ENCODE measurements at regions of chr3 and their contacts with region 1.

Region 1: DNA sequence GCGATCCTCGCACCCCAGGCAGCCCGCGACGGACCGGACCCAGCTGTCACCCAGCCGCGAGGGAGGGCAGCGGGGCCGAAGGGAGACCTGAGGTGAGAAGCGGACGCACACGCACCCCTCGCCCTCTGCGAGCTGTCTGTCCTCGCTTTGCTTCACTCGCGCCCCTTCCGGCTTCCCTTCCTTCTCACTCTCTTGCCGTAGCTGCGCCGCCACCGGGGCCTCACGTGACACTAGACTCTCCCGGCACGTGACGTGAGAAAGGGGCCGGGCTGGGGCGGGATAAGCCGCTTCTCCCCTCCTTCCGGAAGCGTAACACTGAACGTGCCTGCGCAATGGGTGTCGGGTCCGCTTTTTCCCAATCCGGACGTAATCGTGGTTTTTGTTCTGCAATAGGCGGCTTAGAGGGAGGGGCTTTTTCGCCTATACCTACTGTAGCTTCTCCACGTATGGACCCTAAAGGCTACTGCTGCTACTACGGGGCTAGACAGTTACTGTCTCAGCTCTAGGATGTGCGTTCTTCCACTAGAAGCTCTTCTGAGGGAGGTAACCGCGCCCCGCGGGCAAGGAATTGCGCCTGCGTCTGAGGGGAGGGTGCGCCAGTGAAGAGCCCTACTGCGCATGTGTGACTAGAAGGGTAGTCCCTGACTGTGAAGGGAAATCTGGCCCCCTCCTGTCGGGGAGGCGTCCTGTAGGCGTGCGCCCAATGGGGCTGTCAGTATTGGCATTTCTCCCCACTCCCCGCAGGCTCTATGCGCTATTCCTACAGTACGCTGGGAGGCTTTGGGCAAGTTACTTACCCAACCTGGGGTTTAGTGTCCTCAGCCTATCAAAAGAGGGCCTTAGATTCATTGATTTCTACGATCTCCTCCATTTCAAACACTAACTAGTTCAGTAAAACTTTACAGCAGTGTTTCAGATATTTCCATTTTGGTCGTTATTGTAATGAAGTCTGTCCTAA is at the starts of genes ATG3 and SLC35A5:
- DNase-seq: peak; percentile 99
- ATAC-seq: peak; percentile 80
- H3K4me3 Mint-ChIP-seq: peak within 1 kb of the TSS; percentile 99
- H3K27ac Mint-ChIP-seq: peak within 1 kb of the TSS; percentile 99
- H3K4me1 Mint-ChIP-seq: peaks cover 50% of the 10 kb centered on the region
- H3K27me3 Mint-ChIP-seq: no peaks in the 10 kb centered on the region
- CTCF ChIP-seq: no peak
- total RNA-seq, gene ATG3: 48.3 and 54.9 TPM in 2 replicates
- total RNA-seq, gene SLC35A5: 25.1 and 26.6 TPM in 2 replicates

Region 2: DNA sequence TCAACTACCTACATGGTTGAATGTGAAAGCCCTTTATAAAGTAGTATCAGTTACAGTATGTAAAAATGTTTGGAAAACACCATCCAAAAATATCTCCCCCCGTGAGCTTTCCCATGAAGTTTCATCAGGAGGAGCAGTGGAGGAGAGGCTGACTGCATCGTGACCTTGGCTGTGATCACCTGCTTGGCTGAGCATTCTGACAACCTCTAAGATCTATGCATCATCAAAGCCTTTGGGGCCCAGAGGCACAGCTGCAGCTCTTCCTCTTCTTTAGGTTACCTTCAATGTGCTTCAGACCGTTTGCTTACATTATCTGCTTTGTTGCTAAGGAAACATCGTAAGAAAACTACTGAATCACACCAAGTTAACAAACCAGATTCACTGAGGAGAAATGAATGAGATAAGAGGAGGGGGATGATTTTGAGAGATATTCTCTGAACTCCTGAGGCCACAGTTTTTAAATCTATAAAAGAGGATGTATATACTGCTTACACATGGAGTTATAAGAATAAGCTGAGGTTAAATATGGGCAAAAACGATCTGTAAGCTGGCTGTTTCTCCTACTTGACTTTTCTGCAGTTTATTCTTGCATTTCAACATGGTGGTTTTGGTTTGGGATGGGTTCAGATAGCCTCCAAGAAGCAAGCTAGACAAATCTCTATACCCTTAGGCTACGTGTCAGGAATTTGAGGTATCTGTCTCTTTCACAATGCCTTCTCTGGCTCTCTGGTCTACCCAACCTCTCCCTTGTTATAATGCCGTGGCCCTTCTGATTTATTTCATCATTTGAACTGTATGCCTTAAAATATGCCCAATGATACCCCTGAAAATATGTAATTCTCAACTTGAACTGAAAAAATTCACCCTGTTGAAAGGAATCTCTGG is 432.9 kb before region 1 on chr3:
- CTCF ChIA-PET with region 1: no interaction called
- POLR2A ChIA-PET with region 1: no interaction called
- intact Hi-C with region 1: loop called (anchors 1 kb)
- DNase-seq: peak; percentile 39
- ATAC-seq: peak; percentile 73
- H3K4me3 Mint-ChIP-seq: peak overlapping the region; percentile 6
- H3K27ac Mint-ChIP-seq: peak overlapping the region; percentile 82
- H3K4me1 Mint-ChIP-seq: peaks cover 91% of the 10 kb centered on the region
- H3K27me3 Mint-ChIP-seq: no peaks in the 10 kb centered on the region
- CTCF ChIP-seq: no peak

Region 3: DNA sequence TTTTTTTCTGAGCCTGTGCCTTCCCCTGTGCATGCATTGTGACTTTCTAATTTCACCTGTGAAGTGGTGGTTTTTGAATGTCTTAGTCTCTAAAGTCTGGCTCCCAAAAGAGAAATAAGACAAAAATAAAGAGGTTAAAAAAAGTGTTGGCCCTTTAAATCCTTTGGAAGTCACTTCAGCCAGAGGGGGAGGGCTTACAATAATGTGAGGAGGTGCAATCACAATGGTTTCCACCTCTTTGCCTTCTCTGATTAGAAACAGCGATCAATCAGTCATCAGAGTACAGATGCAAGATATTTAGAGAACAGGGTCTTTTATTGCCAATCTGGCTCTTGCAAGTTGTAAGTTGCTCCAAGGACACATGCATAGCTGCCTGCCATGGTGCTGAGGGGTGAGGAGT is 364.9 kb before region 1 on chr3:
- CTCF ChIA-PET with region 1: no interaction called
- POLR2A ChIA-PET with region 1: no interaction called
- intact Hi-C with region 1: no loop called
- DNase-seq: no peak
- ATAC-seq: no peak
- H3K4me3 Mint-ChIP-seq: no peak overlapping the region
- H3K27ac Mint-ChIP-seq: no peak overlapping the region
- H3K4me1 Mint-ChIP-seq: no peaks in the 10 kb centered on the region
- H3K27me3 Mint-ChIP-seq: no peaks in the 10 kb centered on the region
- CTCF ChIP-seq: no peak

Region 4: DNA sequence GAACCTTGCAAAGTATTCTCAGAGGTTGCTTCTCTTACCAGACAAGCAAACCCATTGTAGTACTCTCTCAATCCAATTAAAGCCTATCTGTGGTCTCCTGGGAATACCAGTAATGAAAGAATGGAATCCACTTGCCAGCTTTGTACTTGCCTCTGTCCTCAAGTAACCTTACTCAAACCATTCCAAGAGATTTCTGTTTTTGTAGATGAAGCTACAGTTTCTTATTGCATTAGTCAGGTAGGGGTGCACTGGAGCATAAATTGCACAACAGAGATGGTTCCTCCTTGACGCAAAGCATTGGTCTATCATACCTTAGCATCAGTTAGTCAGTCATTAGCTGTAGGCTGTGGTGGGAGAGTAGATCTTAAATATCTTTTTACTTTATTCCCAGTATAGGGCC is 115.7 kb before region 1 on chr3:
- CTCF ChIA-PET with region 1: no interaction called
- POLR2A ChIA-PET with region 1: no interaction called
- intact Hi-C with region 1: no loop called
- DNase-seq: no peak
- ATAC-seq: peak; percentile 71
- H3K4me3 Mint-ChIP-seq: no peak overlapping the region
- H3K27ac Mint-ChIP-seq: peak overlapping the region; percentile 4
- H3K4me1 Mint-ChIP-seq: peaks cover 39% of the 10 kb centered on the region
- H3K27me3 Mint-ChIP-seq: no peaks in the 10 kb centered on the region
- CTCF ChIP-seq: no peak

Region 5: DNA sequence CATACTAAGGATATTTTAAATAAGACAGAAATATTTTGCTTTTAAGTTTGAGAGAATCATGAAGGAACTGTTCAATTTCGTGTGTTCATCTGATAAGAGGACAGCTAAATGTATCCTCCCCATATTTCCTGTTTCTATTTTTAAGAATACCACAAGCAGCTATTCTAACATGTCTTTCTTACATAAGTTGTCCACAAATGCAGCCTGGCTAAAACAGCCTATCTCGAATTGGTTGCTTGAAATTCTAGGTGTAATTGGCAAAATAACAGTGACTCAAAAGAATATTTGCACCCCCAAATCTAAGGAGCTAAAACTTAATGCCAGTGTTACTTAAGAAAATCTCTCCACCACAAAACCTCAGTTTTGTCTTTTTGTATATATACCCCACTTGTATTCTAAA is 97.7 kb before region 1 on chr3:
- CTCF ChIA-PET with region 1: no interaction called
- POLR2A ChIA-PET with region 1: no interaction called
- intact Hi-C with region 1: loop called (anchors 1 kb)
- DNase-seq: no peak
- ATAC-seq: peak; percentile 50
- H3K4me3 Mint-ChIP-seq: peak overlapping the region; percentile 68
- H3K27ac Mint-ChIP-seq: peak overlapping the region; percentile 65
- H3K4me1 Mint-ChIP-seq: peaks cover 91% of the 10 kb centered on the region
- H3K27me3 Mint-ChIP-seq: no peaks in the 10 kb centered on the region
- CTCF ChIP-seq: no peak

Region 6: DNA sequence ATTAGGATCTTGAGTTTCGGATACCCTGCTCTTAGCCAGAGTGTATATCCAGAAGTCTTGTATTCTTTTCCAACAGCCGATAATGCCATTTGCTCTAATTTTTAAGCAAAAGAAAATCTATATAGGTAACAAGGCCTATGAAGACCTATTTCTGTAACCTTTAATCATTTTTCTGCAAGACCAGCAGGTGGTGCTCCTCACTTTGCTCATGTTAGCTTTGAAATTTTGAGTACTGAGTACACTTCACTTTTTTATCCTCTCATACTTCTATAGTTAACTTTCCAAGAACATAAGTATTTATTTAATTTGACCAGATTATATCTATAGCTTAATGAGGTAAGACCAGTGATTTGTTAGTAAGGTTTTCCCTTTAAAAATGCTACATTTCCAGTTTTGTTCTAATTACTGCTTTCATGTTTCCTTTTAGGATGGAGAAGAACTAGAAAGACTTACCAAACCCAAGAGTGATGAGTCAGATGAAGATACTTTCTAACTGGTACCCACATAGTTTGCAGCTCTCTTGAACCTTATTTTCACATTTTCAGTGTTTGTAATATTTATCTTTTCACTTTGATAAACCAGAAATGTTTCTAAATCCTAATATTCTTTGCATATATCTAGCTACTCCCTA is 20.3 kb after region 1 on chr3:
- CTCF ChIA-PET with region 1: interaction called, 4 read pairs
- POLR2A ChIA-PET with region 1: interaction called, 16 read pairs
- intact Hi-C with region 1: loop called (anchors 1 kb)
- DNase-seq: no peak
- ATAC-seq: no peak
- H3K4me3 Mint-ChIP-seq: no peak overlapping the region
- H3K27ac Mint-ChIP-seq: no peak overlapping the region
- H3K4me1 Mint-ChIP-seq: peaks cover 42% of the 10 kb centered on the region
- H3K27me3 Mint-ChIP-seq: no peaks in the 10 kb centered on the region
- CTCF ChIP-seq: peak; percentile 59

Region 7: GRCh38 chr3:112990672-112991602 is 428.9 kb after region 1 on chr3 and contains the start of gene GTPBP8:
- CTCF ChIA-PET with region 1: no interaction called
- POLR2A ChIA-PET with region 1: interaction called, 3 read pairs
- intact Hi-C with region 1: loop called (anchors 2 kb)
- DNase-seq: peak; percentile 79
- ATAC-seq: peak; percentile 86
- H3K4me3 Mint-ChIP-seq: peak within 1 kb of the TSS; percentile 92
- H3K27ac Mint-ChIP-seq: peak within 1 kb of the TSS; percentile 92
- H3K4me1 Mint-ChIP-seq: peaks cover 27% of the 10 kb centered on the region
- H3K27me3 Mint-ChIP-seq: no peaks in the 10 kb centered on the region
- CTCF ChIP-seq: no peak
- total RNA-seq, gene GTPBP8: 14.3 and 18.1 TPM in 2 replicates

Region 8: GRCh38 chr3:113275929-113276750 is 714.1 kb after region 1 on chr3:
- CTCF ChIA-PET with region 1: no interaction called
- POLR2A ChIA-PET with region 1: no interaction called
- intact Hi-C with region 1: no loop called
- DNase-seq: peak; percentile 32
- ATAC-seq: peak; percentile 79
- H3K4me3 Mint-ChIP-seq: peak overlapping the region; percentile 83
- H3K27ac Mint-ChIP-seq: peak overlapping the region; percentile 83
- H3K4me1 Mint-ChIP-seq: peaks cover 32% of the 10 kb centered on the region
- H3K27me3 Mint-ChIP-seq: no peaks in the 10 kb centered on the region
- CTCF ChIP-seq: no peak

Region 9: GRCh38 chr3:113696658-113697499 is 1134.9 kb after region 1 on chr3:
- CTCF ChIA-PET with region 1: no interaction called
- POLR2A ChIA-PET with region 1: no interaction called
- intact Hi-C with region 1: loop called (anchors 1 kb)
- DNase-seq: peak; percentile 95
- ATAC-seq: peak; percentile 89
- H3K4me3 Mint-ChIP-seq: no peak overlapping the region
- H3K27ac Mint-ChIP-seq: no peak overlapping the region
- H3K4me1 Mint-ChIP-seq: peaks cover 29% of the 10 kb centered on the region
- H3K27me3 Mint-ChIP-seq: no peaks in the 10 kb centered on the region
- CTCF ChIP-seq: no peak

Measured in activated B cell treated with CpG ODN at 0.5 μM for 24 hours (primary cell).